HEK293 (cell line): ENCODE measurements at regions of chr1 and their contacts with region 1.

Region 1: GRCh38 chr1:7070389-7071029 is 285.3 kb downstream of the CAMTA1 start:
- H3K4me3 ChIP-seq: no peak overlapping the region
- H3K27ac ChIP-seq: no peak overlapping the region
- H3K4me1 ChIP-seq: no peaks in the 10 kb centered on the region
- CTCF ChIP-seq: peak; percentile 47

Region 2: DNA sequence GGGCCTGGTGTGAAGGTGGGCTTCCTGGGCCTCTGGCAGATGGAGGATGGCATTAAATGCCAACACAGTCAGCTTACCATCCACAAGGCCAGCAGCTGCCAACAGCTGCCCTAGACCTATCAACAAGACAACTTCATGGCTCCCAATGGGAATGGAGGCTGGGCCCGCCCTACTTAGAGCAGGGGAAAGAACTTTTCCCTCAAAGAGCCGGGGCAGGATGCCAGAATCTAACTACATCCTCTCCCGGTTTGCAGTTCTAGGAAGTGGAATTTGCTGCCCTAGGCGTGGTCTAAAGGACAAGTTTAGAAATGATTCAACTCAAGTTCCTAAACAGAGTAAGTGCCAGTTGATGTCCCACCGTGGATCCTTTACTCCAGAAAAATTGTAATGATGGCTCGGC is 847.9 kb before region 1 on chr1:
- CTCF ChIA-PET with region 1: no interaction called
- POLR2A ChIA-PET with region 1: no interaction called
- H3K4me3 ChIP-seq: no peak overlapping the region
- H3K27ac ChIP-seq: no peak overlapping the region
- H3K4me1 ChIP-seq: no peaks in the 10 kb centered on the region
- CTCF ChIP-seq: no peak

Region 3: DNA sequence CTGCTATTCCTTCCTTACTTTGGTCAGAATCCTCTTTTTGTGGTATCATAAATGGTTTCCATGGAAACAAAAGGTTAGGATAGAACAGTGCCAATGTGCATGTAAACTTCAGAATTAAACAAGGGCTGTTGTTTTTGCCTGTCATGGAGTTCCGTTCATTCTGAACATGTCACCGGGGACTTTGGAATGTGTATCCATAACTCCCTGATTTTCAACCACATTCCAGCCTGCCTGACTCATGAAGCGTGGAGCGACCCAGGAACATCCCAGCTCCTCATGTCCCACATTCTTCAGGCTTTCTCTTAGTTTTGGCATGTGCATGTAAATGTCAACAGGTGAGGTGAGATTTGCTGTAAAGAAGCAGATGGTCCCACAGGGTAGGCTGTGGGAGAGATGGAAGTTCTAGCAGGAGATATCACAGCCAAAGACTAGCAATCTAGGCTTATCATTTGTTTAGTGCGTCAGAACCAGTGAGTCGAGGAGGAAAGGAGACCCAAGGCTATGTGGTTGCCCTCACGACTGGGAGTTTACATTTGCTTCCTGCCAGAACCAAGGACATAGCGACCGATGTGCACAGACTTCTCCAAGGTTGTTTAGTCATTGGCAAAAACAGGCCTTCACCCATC is 345.9 kb before region 1 on chr1:
- CTCF ChIA-PET with region 1: interaction called, 11 read pairs
- POLR2A ChIA-PET with region 1: no interaction called
- H3K4me3 ChIP-seq: no peak overlapping the region
- H3K27ac ChIP-seq: no peak overlapping the region
- H3K4me1 ChIP-seq: no peaks in the 10 kb centered on the region
- CTCF ChIP-seq: no peak

Region 4: GRCh38 chr1:7050751-7051668 is 19.5 kb before region 1 on chr1:
- CTCF ChIA-PET with region 1: interaction called, 11 read pairs
- POLR2A ChIA-PET with region 1: no interaction called
- H3K4me3 ChIP-seq: no peak overlapping the region
- H3K27ac ChIP-seq: no peak overlapping the region
- H3K4me1 ChIP-seq: no peaks in the 10 kb centered on the region
- CTCF ChIP-seq: no peak

Region 5: GRCh38 chr1:7149080-7149838 is 78.8 kb after region 1 on chr1:
- CTCF ChIA-PET with region 1: no interaction called
- POLR2A ChIA-PET with region 1: no interaction called
- H3K4me3 ChIP-seq: no peak overlapping the region
- H3K27ac ChIP-seq: no peak overlapping the region
- H3K4me1 ChIP-seq: no peaks in the 10 kb centered on the region
- CTCF ChIP-seq: no peak

Region 6: GRCh38 chr1:7207875-7208646 is 137.6 kb after region 1 on chr1:
- CTCF ChIA-PET with region 1: interaction called, 16 read pairs
- POLR2A ChIA-PET with region 1: no interaction called
- H3K4me3 ChIP-seq: no peak overlapping the region
- H3K27ac ChIP-seq: no peak overlapping the region
- H3K4me1 ChIP-seq: no peaks in the 10 kb centered on the region
- CTCF ChIP-seq: peak; percentile 44; the same call in 1 of the 2 replicates